Activated CD4-positive, alpha-beta T cell treated with anti-CD3 and anti-CD28 coated beads for 36 hours (primary cell): ENCODE measurements at regions of chr10 and their contacts with region 1.

Region 1: GRCh38 chr10:17228091-17228940 is at the start of gene VIM:
- DNase-seq: peak; percentile 93
- ATAC-seq: peak; percentile 47
- H3K4me3 Mint-ChIP-seq: peak within 1 kb of the TSS; percentile 82
- H3K27ac Mint-ChIP-seq: peak within 1 kb of the TSS; percentile 90
- H3K4me1 Mint-ChIP-seq: peaks cover 41% of the 10 kb centered on the region
- H3K27me3 Mint-ChIP-seq: peaks cover 1% of the 10 kb centered on the region
- total RNA-seq, gene VIM: 334 to 396 TPM

Region 2: DNA sequence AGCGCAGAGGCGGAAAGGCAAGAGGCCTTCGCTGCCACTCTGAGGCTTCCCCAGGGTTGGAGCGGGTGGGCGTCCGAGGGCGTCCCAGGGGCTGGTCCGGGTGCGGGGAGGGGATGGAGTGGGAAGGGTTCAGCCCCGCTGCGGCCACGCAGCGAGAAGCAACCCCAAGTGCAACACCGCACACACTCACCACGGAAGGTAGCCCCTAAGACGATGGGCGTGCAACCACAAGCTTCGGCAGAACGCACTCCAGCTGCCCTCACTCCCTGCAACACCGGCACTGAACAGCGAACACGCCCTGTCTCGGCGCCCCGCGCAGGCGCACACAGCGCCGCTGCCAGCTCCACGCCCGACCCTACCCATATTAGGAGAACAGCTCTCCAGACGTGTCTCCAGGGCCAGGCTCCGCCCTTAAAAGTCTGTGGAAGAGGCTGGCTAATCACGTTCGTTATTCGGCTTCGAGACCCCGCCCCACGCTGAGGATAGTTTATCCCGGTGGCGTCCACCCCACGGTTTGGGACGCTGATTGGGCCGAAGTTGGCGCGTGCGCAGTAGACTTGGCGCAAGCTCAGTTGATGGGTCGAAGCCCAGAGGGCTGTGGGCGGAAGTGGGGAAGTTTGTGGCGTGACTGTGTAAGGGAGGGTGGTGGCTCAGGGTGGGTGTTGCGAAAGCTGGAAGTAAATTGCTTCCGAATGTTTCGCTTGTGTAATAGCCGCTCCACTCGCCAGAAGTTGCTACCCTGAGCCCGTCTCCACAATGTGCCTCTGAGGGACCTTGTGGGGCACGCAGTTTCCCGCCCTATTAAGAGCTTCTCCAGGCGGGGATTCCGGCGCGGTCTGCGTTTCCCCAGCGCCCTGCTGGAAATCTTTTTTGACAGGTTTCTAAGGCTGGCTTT is 410.9 kb before region 1 on chr10 and contains the start of gene RSU1:
- CTCF ChIA-PET with region 1: interaction called, 3 read pairs
- POLR2A ChIA-PET with region 1: interaction called, 3 read pairs
- intact Hi-C with region 1: loop called (anchors 1 kb)
- DNase-seq: peak; percentile 100
- ATAC-seq: peak; percentile 99
- H3K4me3 Mint-ChIP-seq: peak within 1 kb of the TSS; percentile 87
- H3K27ac Mint-ChIP-seq: peak within 1 kb of the TSS; percentile 95
- H3K4me1 Mint-ChIP-seq: peaks cover 27% of the 10 kb centered on the region
- H3K27me3 Mint-ChIP-seq: no peaks in the 10 kb centered on the region
- total RNA-seq, gene RSU1: 38.4 to 62.8 TPM

Region 3: GRCh38 chr10:17001961-17002749 is 226.2 kb before region 1 on chr10:
- CTCF ChIA-PET with region 1: no interaction called
- POLR2A ChIA-PET with region 1: interaction called, 5 read pairs
- intact Hi-C with region 1: loop called (anchors 1 kb)
- DNase-seq: peak; percentile 34
- ATAC-seq: peak; percentile 62
- H3K4me3 Mint-ChIP-seq: peak overlapping the region; percentile 24
- H3K27ac Mint-ChIP-seq: peak overlapping the region; percentile 91
- H3K4me1 Mint-ChIP-seq: peaks cover 64% of the 10 kb centered on the region
- H3K27me3 Mint-ChIP-seq: peaks cover 12% of the 10 kb centered on the region

Region 4: DNA sequence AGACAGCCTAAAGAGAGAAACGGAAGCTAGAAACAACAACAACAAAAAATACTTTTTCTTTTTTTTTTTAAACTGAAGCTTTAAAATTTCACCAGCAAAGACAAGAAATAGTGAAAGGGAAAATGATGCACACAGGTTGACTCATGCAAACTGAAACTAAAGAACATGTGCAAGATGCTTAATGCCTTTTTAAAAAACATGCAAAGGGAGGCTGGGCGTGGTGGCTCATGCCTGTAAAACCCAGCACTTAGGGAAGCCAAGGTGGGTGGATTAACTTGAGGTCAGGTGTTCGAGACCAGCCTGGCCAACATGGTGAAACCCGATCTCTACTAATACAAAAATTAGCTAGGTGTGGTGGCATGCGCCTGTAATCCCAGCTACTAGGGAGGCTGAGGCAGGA is 83.6 kb before region 1 on chr10:
- CTCF ChIA-PET with region 1: interaction called, 3 read pairs
- POLR2A ChIA-PET with region 1: interaction called, 4 read pairs
- intact Hi-C with region 1: loop called (anchors 1 kb)
- DNase-seq: peak; percentile 80
- ATAC-seq: peak; percentile 96
- H3K4me3 Mint-ChIP-seq: no peak overlapping the region
- H3K27ac Mint-ChIP-seq: peak overlapping the region; percentile 51
- H3K4me1 Mint-ChIP-seq: peaks cover 31% of the 10 kb centered on the region
- H3K27me3 Mint-ChIP-seq: no peaks in the 10 kb centered on the region

Region 5: GRCh38 chr10:17200912-17201793 is 27.2 kb before region 1 on chr10 and contains the start of gene TRDMT1:
- CTCF ChIA-PET with region 1: interaction called, 18 read pairs
- POLR2A ChIA-PET with region 1: interaction called, 26 read pairs
- intact Hi-C with region 1: loop called (anchors 1 kb)
- DNase-seq: peak; percentile 85
- ATAC-seq: peak; percentile 91
- H3K4me3 Mint-ChIP-seq: peak within 1 kb of the TSS; percentile 86
- H3K27ac Mint-ChIP-seq: peak within 1 kb of the TSS; percentile 89
- H3K4me1 Mint-ChIP-seq: peaks cover 46% of the 10 kb centered on the region
- H3K27me3 Mint-ChIP-seq: no peaks in the 10 kb centered on the region
- total RNA-seq, gene TRDMT1: 6.6 to 11.6 TPM

Region 6: DNA sequence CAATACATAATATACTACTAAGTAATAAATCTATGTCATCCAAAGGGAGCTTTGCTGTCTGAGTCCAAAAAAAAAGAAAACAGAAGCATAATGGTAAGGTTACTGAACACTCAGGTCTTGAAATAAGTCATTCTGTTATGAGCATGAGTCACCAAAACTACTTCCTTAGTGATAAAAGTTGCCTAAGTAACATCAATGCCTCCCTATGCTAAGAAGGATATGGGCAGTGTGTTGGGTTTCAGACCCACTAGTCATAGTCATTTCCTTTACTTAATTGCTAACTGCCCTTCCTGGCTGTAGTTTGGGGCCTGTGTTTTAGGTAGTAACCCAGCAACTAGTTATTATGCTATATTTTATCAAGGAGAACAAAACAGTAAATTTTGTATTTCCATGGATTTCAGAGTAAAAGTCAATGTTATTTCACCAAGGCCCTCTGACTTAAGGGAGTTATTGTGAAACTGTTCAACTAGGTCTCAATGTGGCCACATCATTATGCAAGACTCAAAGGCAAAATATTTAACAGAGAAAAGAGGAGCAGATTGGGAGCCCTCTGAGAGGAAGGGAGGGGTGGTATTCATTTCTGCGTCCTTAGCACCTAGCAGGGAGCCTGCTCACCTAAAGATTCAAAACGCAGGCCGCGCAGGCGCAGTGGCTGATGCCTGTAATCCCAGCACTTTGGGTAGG is 12.0 kb before region 1 on chr10:
- CTCF ChIA-PET with region 1: interaction called, 11 read pairs
- POLR2A ChIA-PET with region 1: interaction called, 4 read pairs
- intact Hi-C with region 1: loop called (anchors 1 kb)
- DNase-seq: peak; percentile 48
- ATAC-seq: peak; percentile 96
- H3K4me3 Mint-ChIP-seq: no peak overlapping the region
- H3K27ac Mint-ChIP-seq: peak overlapping the region; percentile 85
- H3K4me1 Mint-ChIP-seq: peaks cover 39% of the 10 kb centered on the region
- H3K27me3 Mint-ChIP-seq: no peaks in the 10 kb centered on the region